ENCODE measurements at regions of chr9 and their contacts with region 1.

Region 1: DNA sequence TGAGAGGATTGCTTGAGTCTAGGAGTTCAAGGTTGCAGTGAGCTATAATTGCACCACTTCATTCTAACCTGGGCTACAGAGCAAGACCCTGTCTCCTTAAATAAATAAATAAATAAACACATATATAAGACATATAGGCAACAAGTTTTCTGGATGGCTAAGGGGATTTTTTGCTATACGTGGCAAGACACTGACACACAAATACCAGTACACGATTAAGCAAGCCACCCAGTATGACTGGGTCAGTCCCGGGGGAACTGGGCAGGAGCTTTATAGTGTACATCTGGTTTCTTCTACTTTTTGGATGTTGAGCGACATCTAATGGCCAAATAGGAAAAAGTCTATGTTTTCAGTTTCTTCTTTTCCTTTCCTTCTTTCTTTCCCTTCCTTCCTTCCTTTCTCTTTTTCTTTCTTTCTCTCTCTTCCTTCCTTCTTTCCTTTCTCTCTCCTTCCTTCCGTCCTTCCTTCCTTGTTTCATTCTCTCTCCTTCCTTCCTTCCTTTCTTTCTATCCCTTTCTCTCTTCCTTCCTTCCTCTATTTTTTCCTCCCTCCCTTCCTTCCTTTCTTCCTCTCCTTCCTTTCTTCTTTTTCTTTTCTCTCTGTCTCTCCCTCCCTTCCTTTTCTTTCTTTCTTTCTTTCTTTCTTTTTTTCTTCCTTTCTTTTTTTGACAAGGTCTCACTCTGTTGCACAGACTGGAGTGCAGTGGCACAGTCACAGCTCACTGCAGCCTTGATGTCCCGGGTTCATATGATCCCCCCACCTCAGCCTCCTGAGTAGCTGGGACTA is 47.0 kb upstream of the PLIN2 start:
- DNase-seq: peak; percentile 61
- ATAC-seq: peak; percentile 87
- H3K4me3 ChIP-seq: no peak overlapping the region
- H3K4me3 Mint-ChIP-seq: no peak overlapping the region
- H3K27ac ChIP-seq: no peak overlapping the region
- H3K27ac Mint-ChIP-seq: no peak overlapping the region
- H3K4me1 ChIP-seq: peaks cover 0 to 4% of the 10 kb centered on the region in 2 donors
- H3K4me1 Mint-ChIP-seq: peaks cover 6% of the 10 kb centered on the region
- H3K27me3 ChIP-seq: no peaks in the 10 kb centered on the region
- H3K27me3 Mint-ChIP-seq: no peaks in the 10 kb centered on the region
- CTCF ChIP-seq: peak; percentile 83

Region 2: GRCh38 chr9:18255158-18255629 is 919.1 kb before region 1 on chr9:
- CTCF ChIA-PET with region 1: interaction called, 22 read pairs
- POLR2A ChIA-PET with region 1: no interaction called
- intact Hi-C with region 1: no loop called
- DNase-seq: peak; percentile 65
- ATAC-seq: peak; percentile 70
- H3K4me3 ChIP-seq: no peak overlapping the region
- H3K4me3 Mint-ChIP-seq: no peak overlapping the region
- H3K27ac ChIP-seq: no peak overlapping the region
- H3K27ac Mint-ChIP-seq: no peak overlapping the region
- H3K4me1 ChIP-seq: no peaks in the 10 kb centered on the region
- H3K4me1 Mint-ChIP-seq: no peaks in the 10 kb centered on the region
- H3K27me3 ChIP-seq: peaks cover 0 to 5% (median 0%) of the 10 kb centered on the region in 4 experiments
- H3K27me3 Mint-ChIP-seq: peaks cover 8% of the 10 kb centered on the region
- CTCF ChIP-seq: peak; percentile 97

Region 3: GRCh38 chr9:19028835-19029451 is 145.4 kb before region 1 on chr9:
- CTCF ChIA-PET with region 1: interaction called, 14 read pairs
- POLR2A ChIA-PET with region 1: no interaction called
- intact Hi-C with region 1: no loop called
- DNase-seq: peak; percentile 38
- ATAC-seq: peak; percentile 41
- H3K4me3 ChIP-seq: no peak overlapping the region
- H3K4me3 Mint-ChIP-seq: no peak overlapping the region
- H3K27ac ChIP-seq: no peak overlapping the region
- H3K27ac Mint-ChIP-seq: no peak overlapping the region
- H3K4me1 ChIP-seq: no peaks in the 10 kb centered on the region
- H3K4me1 Mint-ChIP-seq: no peaks in the 10 kb centered on the region
- H3K27me3 ChIP-seq: no peaks in the 10 kb centered on the region
- H3K27me3 Mint-ChIP-seq: peaks cover 14% of the 10 kb centered on the region
- CTCF ChIP-seq: peak; percentile 79

Region 4: GRCh38 chr9:19085295-19085694 is 89.0 kb before region 1 on chr9:
- CTCF ChIA-PET with region 1: interaction called, 51 read pairs
- POLR2A ChIA-PET with region 1: interaction called, 5 read pairs
- intact Hi-C with region 1: loop called (anchors 1 kb)
- DNase-seq: peak; percentile 30
- ATAC-seq: no peak
- H3K4me3 ChIP-seq: no peak overlapping the region
- H3K4me3 Mint-ChIP-seq: no peak overlapping the region
- H3K27ac ChIP-seq: no peak overlapping the region
- H3K27ac Mint-ChIP-seq: no peak overlapping the region
- H3K4me1 ChIP-seq: no peaks in the 10 kb centered on the region
- H3K4me1 Mint-ChIP-seq: no peaks in the 10 kb centered on the region
- H3K27me3 ChIP-seq: no peaks in the 10 kb centered on the region
- H3K27me3 Mint-ChIP-seq: no peaks in the 10 kb centered on the region
- CTCF ChIP-seq: peak; percentile 57

Region 5: DNA sequence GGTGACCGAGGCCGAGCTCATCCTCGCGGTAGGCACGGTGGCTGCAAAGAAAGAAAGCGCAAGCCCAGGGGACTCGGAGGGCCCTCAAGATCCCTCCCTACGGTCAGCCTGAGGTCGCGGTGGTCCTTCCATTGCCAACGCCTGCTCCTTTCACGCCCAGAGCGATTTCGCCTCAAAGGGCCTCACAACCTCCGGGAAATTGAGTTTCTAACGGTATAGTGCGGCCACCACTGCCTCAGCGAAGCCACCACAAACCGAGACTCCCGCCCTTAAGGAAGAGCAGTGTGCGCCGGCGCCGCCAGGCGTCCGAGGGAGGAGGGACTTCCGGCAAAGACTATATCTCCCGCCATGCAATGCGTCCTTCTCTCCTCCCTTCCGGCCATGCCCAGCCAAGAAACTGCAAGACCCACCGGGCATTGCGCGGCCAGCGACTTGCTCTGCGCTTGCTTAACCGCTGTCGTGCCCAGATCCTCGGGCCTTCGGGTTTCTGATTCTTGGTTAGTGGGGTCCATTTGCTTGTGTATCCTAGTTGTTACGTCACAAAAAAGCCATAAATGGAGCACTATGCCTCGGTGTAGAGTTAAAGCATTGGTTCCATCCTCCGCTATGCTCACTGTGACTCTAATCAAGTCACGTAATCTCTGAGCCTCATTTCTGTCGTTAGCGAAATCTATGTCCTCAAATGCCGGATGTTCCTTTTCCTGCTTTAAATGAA is 71.5 kb before region 1 on chr9 and contains the start of gene HAUS6:
- CTCF ChIA-PET with region 1: no interaction called
- POLR2A ChIA-PET with region 1: interaction called, 3 read pairs
- intact Hi-C with region 1: loop called (anchors 1 kb)
- DNase-seq: peak; percentile 96
- ATAC-seq: peak; percentile 95
- H3K4me3 ChIP-seq: peak within 1 kb of the TSS; percentile 63 to 92 (median 82)
- H3K4me3 Mint-ChIP-seq: peak within 1 kb of the TSS; percentile 98
- H3K27ac ChIP-seq: peak within 1 kb of the TSS; percentile 53 to 88
- H3K27ac Mint-ChIP-seq: peak within 1 kb of the TSS; percentile 94
- H3K4me1 ChIP-seq: peaks cover 3 to 16% of the 10 kb centered on the region in 2 donors
- H3K4me1 Mint-ChIP-seq: peaks cover 22% of the 10 kb centered on the region
- H3K27me3 ChIP-seq: no peaks in the 10 kb centered on the region
- H3K27me3 Mint-ChIP-seq: no peaks in the 10 kb centered on the region
- CTCF ChIP-seq: peak; percentile 38
- total RNA-seq, gene HAUS6: 13.5 and 14.6 TPM in 2 replicates

Region 6: GRCh38 chr9:19127881-19128500 is 46.3 kb before region 1 on chr9:
- CTCF ChIA-PET with region 1: interaction called, 5 read pairs
- POLR2A ChIA-PET with region 1: no interaction called
- intact Hi-C with region 1: loop called (anchors 2 kb)
- DNase-seq: no peak
- ATAC-seq: peak; percentile 10
- H3K4me3 ChIP-seq: peak overlapping the region; percentile 72 to 82 (median 77)
- H3K4me3 Mint-ChIP-seq: peak overlapping the region; percentile 96
- H3K27ac ChIP-seq: peak overlapping the region; percentile 66 to 67
- H3K27ac Mint-ChIP-seq: peak overlapping the region; percentile 88
- H3K4me1 ChIP-seq: peaks cover 5 to 26% of the 10 kb centered on the region in 2 donors
- H3K4me1 Mint-ChIP-seq: peaks cover 28% of the 10 kb centered on the region
- H3K27me3 ChIP-seq: no peaks in the 10 kb centered on the region
- H3K27me3 Mint-ChIP-seq: no peaks in the 10 kb centered on the region
- CTCF ChIP-seq: no peak

Region 7: DNA sequence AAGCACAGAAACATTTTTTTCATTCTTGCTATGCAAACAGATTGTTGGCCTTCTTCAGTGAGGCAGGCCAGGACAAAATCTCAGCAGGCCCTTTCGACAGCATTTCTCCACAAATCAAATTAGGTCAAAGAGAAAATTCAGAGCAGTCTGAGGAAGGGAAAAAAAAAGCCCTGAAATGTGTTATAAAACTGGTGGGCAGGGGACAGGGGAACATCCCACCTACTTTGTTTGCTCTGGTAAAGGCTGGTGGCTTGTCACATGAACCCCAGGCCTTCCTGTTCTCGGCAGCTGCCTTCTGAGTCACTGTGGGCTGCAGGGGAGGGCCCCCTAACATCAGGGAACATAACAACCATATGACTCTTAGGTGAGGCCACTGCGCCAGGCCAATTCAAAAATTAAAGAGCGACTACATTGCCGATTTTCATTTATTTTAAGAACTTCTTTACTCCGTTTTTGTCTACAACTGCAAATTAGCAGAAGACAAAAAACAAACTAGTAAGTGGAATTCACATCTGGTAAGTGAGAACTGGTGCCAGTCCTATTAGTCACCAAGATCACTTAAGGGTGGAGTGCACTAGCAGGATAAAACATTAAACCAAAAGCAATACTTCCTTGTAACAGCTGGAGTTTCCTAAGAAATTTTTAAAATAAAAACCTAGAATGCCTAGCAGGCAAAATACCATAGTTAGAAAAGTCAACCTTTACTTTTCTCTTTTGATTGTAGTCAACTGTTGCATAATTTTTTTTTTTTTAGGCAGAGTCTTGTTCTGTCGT is 10.0 kb after region 1 on chr9:
- CTCF ChIA-PET with region 1: interaction called, 20 read pairs
- POLR2A ChIA-PET with region 1: no interaction called
- intact Hi-C with region 1: no loop called
- DNase-seq: peak; percentile 62
- ATAC-seq: peak; percentile 97
- H3K4me3 ChIP-seq: no peak overlapping the region
- H3K4me3 Mint-ChIP-seq: peak overlapping the region; percentile 39
- H3K27ac ChIP-seq: peak overlapping the region; percentile 33 to 58
- H3K27ac Mint-ChIP-seq: peak overlapping the region; percentile 92
- H3K4me1 ChIP-seq: peaks cover 3 to 9% of the 10 kb centered on the region in 2 donors
- H3K4me1 Mint-ChIP-seq: peaks cover 12% of the 10 kb centered on the region
- H3K27me3 ChIP-seq: no peaks in the 10 kb centered on the region
- H3K27me3 Mint-ChIP-seq: no peaks in the 10 kb centered on the region
- CTCF ChIP-seq: no peak

Region 8: DNA sequence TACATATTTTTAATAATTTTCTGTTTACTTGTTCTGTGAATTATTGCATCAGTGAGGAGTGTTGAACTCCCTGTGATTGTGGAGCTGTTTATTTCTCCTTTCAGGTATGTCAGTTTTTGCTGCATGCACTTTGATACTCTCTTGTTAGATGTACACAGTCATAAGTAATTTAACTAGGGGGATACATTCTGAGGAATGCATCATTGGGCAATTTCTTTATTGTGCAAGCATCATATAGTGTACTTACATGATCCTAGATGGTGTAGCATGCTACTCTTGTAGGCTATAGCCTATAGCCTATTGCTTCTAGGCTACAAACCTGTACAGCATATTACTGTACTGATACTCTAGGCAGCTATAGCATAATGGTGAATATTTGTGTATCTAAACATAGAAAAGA is 65.6 kb after region 1 on chr9:
- CTCF ChIA-PET with region 1: no interaction called
- POLR2A ChIA-PET with region 1: no interaction called
- intact Hi-C with region 1: no loop called
- DNase-seq: no peak
- ATAC-seq: no peak
- H3K4me3 ChIP-seq: no peak overlapping the region
- H3K4me3 Mint-ChIP-seq: no peak overlapping the region
- H3K27ac ChIP-seq: no peak overlapping the region
- H3K27ac Mint-ChIP-seq: no peak overlapping the region
- H3K4me1 ChIP-seq: no peaks in the 10 kb centered on the region
- H3K4me1 Mint-ChIP-seq: peaks cover 17% of the 10 kb centered on the region
- H3K27me3 ChIP-seq: no peaks in the 10 kb centered on the region
- H3K27me3 Mint-ChIP-seq: no peaks in the 10 kb centered on the region
- CTCF ChIP-seq: no peak

Region 9: DNA sequence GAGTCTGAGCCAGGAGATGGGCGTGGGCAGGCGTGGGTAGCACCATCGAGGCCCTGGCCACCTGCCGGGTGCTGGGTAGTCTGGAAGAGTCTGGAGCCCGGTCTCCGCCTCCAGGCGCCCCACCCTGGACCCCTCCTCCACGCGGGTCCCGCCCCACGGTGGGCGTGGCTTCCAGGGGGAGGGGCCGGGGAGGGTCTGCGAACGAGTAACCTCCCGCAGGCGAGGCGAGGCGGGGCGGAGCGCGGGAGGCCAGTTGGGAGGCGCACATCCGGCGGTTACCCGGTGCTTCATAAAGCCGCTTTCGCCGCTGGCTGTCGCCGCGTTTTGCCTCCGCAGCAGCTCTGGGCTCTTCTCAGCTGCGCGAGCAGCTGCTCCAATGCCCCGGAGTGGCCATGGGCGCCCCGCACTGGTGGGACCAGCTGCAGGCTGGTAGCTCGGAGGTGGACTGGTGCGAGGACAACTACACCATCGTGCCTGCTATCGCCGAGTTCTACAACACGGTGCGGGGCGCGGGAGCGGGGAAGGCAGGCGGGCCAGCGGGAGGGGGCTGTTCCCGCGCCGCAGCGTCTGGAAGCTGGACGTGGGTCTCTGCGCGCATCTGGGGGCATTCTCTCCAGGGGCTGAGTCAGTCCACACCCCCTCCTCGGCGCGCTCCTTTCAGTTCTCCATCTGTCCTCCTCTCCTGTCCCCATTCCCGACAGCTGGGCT is 234.5 kb after region 1 on chr9 and contains the start of gene ACER2:
- CTCF ChIA-PET with region 1: no interaction called
- POLR2A ChIA-PET with region 1: no interaction called
- intact Hi-C with region 1: no loop called
- DNase-seq: peak; percentile 92
- ATAC-seq: peak; percentile 97
- H3K4me3 ChIP-seq: peak within 1 kb of the TSS; percentile 77 to 94 (median 92)
- H3K4me3 Mint-ChIP-seq: peak within 1 kb of the TSS; percentile 94
- H3K27ac ChIP-seq: peak within 1 kb of the TSS; percentile 31 to 51
- H3K27ac Mint-ChIP-seq: peak within 1 kb of the TSS; percentile 86
- H3K4me1 ChIP-seq: peaks cover 12 to 15% of the 10 kb centered on the region in 2 donors
- H3K4me1 Mint-ChIP-seq: peaks cover 12% of the 10 kb centered on the region
- H3K27me3 ChIP-seq: no peaks in the 10 kb centered on the region
- H3K27me3 Mint-ChIP-seq: no peaks in the 10 kb centered on the region
- CTCF ChIP-seq: no peak
- total RNA-seq, gene ACER2: 5.5 and 6.1 TPM in 2 replicates